ENCODE measurements at regions of chr17 and their contacts with region 1.

Region 1: GRCh38 chr17:1275962-1276736 is 3.3 kb upstream of the TRARG1 start:
- DNase-seq: peak; percentile 41 to 76 (median 61)
- H3K4me3 ChIP-seq: no peak overlapping the region
- H3K27ac ChIP-seq: no peak overlapping the region
- H3K4me1 ChIP-seq: no peaks in the 10 kb centered on the region
- H3K27me3 ChIP-seq: peaks cover 26% of the 10 kb centered on the region
- CTCF ChIP-seq: peak; percentile 52 to 81 (median 75)
- POLR2A ChIP-seq: no peak

Region 2: GRCh38 chr17:1331708-1332107 is 55.6 kb after region 1 on chr17:
- intact Hi-C with region 1: loop called (anchors 5 kb)
- DNase-seq: no peak
- H3K4me3 ChIP-seq: no peak overlapping the region
- H3K27ac ChIP-seq: no peak overlapping the region
- H3K4me1 ChIP-seq: no peaks in the 10 kb centered on the region
- H3K27me3 ChIP-seq: no peaks in the 10 kb centered on the region
- CTCF ChIP-seq: no peak
- POLR2A ChIP-seq: no peak

Region 3: GRCh38 chr17:1365445-1366039 is 89.4 kb after region 1 on chr17:
- intact Hi-C with region 1: no loop called
- DNase-seq: peak; percentile 53 to 85 (median 63)
- H3K4me3 ChIP-seq: no peak overlapping the region
- H3K27ac ChIP-seq: peak overlapping the region in 1 of 5 donors; percentile 25
- H3K4me1 ChIP-seq: peaks cover 30 to 69% of the 10 kb centered on the region in 2 donors
- H3K27me3 ChIP-seq: no peaks in the 10 kb centered on the region
- CTCF ChIP-seq: peak; percentile 82 to 89 (median 86)
- POLR2A ChIP-seq: no peak